ENCODE measurements at regions of chr2 and their contacts with region 1.

Region 1: DNA sequence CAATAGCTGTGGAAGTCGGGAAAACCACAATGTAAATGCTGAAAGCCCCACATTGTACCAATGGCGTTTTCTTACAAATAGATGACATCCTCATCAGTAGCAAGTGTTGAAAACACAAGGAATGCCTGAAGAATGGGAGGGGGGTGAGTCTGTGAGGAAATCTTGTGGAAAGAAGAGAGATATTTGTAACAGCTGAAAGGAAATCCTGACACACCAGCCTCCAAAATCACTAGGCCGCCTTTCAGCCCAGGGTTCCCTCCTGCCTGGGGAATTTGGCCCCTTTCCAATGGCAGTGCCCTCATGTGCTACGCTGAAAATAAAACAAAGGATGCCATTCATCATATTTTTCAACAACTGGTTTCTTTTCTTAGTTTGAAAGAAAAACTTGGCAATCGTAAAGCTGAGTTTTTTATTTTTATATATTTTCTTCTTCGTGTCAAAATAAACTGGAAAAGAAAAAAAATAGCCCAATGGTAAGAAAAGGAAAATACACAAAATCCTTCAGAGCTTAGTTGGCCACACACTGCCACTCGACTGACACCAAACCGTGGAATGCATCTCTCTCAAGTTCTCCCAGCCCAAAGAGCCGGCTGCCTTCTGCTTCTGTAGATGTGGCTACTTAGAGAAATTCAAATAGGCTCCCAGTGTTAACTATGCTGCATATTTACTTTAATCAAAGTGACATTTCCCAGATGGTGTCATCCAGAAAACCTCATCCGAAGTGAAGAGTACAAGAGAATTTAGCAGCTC is 52.0 kb downstream of the FTCDNL1 start:
- DNase-seq: no peak
- ATAC-seq: no peak
- H3K4me3 ChIP-seq: no peak overlapping the region
- H3K4me3 Mint-ChIP-seq: no peak overlapping the region
- H3K27ac ChIP-seq: no peak overlapping the region
- H3K27ac Mint-ChIP-seq: no peak overlapping the region
- H3K4me1 ChIP-seq: no peaks in the 10 kb centered on the region
- H3K4me1 Mint-ChIP-seq: no peaks in the 10 kb centered on the region
- H3K27me3 ChIP-seq: peaks cover 0 to 4% of the 10 kb centered on the region in 2 experiments
- H3K27me3 Mint-ChIP-seq: no peaks in the 10 kb centered on the region
- CTCF ChIP-seq: no peak

Region 2: DNA sequence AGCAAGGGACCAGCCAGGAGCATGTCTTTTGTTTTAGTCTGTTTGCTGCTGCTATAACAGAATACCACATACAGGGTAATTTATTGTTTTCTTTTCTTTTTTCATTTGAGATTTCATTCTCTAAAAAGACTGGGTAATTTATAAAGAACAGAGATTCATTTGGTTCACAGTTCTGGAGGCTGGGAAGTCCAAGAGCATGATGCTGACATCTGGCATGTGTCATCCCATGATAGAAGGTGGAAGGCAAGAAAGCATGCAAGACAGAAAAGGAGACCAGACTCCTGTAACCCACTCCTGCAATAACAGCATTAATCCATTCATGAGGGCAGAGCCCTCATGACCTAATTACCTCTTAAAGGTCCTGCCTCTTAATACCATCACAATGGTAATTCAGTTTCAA is 741.8 kb after region 1 on chr2:
- CTCF ChIA-PET with region 1: no interaction called
- POLR2A ChIA-PET with region 1: no interaction called
- intact Hi-C with region 1: loop called in 1 of 2 experiments (anchors 10 kb)
- DNase-seq: no peak
- ATAC-seq: no peak
- H3K4me3 ChIP-seq: no peak overlapping the region
- H3K4me3 Mint-ChIP-seq: no peak overlapping the region
- H3K27ac ChIP-seq: no peak overlapping the region
- H3K27ac Mint-ChIP-seq: no peak overlapping the region
- H3K4me1 ChIP-seq: no peaks in the 10 kb centered on the region
- H3K4me1 Mint-ChIP-seq: no peaks in the 10 kb centered on the region
- H3K27me3 ChIP-seq: no peaks in the 10 kb centered on the region
- H3K27me3 Mint-ChIP-seq: no peaks in the 10 kb centered on the region
- CTCF ChIP-seq: no peak

Measured in CD4-positive, alpha-beta T cell (primary cell).